CD4-positive, alpha-beta memory T cell (primary cell): ENCODE measurements at regions of chr13 and their contacts with region 1.

Region 1: DNA sequence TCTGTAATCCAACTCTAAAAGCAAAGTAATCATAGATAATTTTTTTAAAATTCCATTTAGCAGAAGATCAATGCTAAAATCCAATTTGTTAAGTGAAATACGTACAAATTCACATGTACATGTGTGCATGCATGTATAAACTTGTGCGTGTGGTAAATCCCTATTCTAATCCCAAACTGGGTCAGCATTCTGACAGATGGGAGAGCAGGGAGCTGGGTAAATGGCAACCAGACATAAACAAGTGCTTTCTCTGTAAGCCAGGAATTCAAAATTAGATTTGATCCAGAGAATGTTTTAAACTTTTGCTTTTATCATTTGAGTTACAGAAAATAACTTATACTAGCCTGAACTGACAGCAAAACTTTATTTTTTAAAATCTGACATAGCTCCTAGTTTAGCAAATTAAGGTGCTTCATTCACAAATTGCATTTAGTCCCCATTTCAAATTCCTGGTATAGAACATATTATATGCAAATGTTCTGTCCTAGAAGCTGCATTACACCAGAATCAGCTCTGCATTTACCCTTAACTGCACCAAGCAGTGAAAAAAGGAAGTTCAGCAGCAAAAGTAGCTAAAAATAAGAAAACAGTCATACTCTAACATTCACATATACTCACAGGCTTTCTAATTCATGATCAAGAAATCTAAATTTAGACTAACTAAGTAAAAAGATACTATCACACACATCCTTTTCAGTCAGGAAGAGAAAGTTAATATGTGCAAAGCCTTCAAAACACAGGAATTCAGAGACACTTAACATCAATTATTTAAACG is 32.6 kb downstream of the UBL3 start:
- DNase-seq: no peak
- H3K4me3 ChIP-seq: no peak overlapping the region
- H3K4me3 Mint-ChIP-seq: peak overlapping the region in 5 of 8 donors; percentile 6 to 78 (median 29)
- H3K27ac ChIP-seq: no peak overlapping the region
- H3K27ac Mint-ChIP-seq: peak overlapping the region in 3 of 7 donors; percentile 10 to 51 (median 18)
- H3K4me1 ChIP-seq: peaks cover 41% of the 10 kb centered on the region
- H3K4me1 Mint-ChIP-seq: peaks cover 39 to 59% (median 49%) of the 10 kb centered on the region in 4 donors
- H3K27me3 ChIP-seq: no peaks in the 10 kb centered on the region
- H3K27me3 Mint-ChIP-seq: no peaks in the 10 kb centered on the region

Region 2: GRCh38 chr13:29654843-29655547 is 162.8 kb before region 1 on chr13:
- CTCF ChIA-PET with region 1: no interaction called
- POLR2A ChIA-PET with region 1: no interaction called
- intact Hi-C with region 1: no loop called
- DNase-seq: no peak
- H3K4me3 ChIP-seq: no peak overlapping the region
- H3K4me3 Mint-ChIP-seq: no peak overlapping the region
- H3K27ac ChIP-seq: no peak overlapping the region
- H3K27ac Mint-ChIP-seq: peak overlapping the region in 1 of 7 donors; percentile 61
- H3K4me1 ChIP-seq: no peaks in the 10 kb centered on the region
- H3K4me1 Mint-ChIP-seq: peaks cover 0 to 2% (median 0%) of the 10 kb centered on the region in 4 donors
- H3K27me3 ChIP-seq: no peaks in the 10 kb centered on the region
- H3K27me3 Mint-ChIP-seq: peaks cover 10 to 14% of the 10 kb centered on the region in 2 donors

Region 3: DNA sequence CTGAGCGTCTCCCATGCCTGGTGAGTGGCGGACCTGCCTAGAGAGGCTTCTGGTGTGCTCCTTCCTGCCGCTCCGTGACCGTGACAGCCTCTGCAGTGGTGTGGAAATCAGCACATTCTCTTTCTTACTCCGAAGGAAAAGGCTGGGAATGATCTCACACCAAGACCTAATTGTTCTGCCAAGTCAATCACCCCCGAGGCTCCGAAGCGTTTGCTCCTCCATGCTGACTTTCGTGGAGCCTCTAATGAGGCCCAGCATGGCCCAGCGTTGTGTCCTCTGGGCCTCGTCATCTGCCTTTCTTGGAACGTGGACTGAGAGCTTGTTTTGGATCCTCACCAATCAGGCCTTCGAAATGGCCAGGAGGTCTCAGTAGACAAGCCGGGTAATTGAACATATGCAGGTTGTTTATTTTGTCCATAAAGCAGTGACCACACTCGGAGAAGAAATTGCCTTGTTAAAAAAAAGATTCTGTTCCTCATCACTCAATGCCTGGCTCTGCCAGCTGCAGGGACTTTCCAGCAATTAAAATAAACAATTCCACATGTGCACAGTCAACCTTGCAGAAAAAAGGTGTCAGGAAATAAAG is 74.5 kb before region 1 on chr13:
- CTCF ChIA-PET with region 1: no interaction called
- POLR2A ChIA-PET with region 1: no interaction called
- intact Hi-C with region 1: no loop called
- DNase-seq: no peak
- H3K4me3 ChIP-seq: no peak overlapping the region
- H3K4me3 Mint-ChIP-seq: no peak overlapping the region
- H3K27ac ChIP-seq: no peak overlapping the region
- H3K27ac Mint-ChIP-seq: no peak overlapping the region
- H3K4me1 ChIP-seq: no peaks in the 10 kb centered on the region
- H3K4me1 Mint-ChIP-seq: no peaks in the 10 kb centered on the region
- H3K27me3 ChIP-seq: no peaks in the 10 kb centered on the region
- H3K27me3 Mint-ChIP-seq: peaks cover 2 to 6% of the 10 kb centered on the region in 2 donors

Region 4: GRCh38 chr13:29835280-29836061 is 17.7 kb after region 1 on chr13:
- CTCF ChIA-PET with region 1: no interaction called
- POLR2A ChIA-PET with region 1: no interaction called
- intact Hi-C with region 1: loop called (anchors 2 kb)
- DNase-seq: no peak
- H3K4me3 ChIP-seq: no peak overlapping the region
- H3K4me3 Mint-ChIP-seq: peak overlapping the region in 2 of 8 donors; percentile 14 to 27
- H3K27ac ChIP-seq: no peak overlapping the region
- H3K27ac Mint-ChIP-seq: no peak overlapping the region
- H3K4me1 ChIP-seq: peaks cover 32% of the 10 kb centered on the region
- H3K4me1 Mint-ChIP-seq: peaks cover 50 to 77% (median 61%) of the 10 kb centered on the region in 4 donors
- H3K27me3 ChIP-seq: no peaks in the 10 kb centered on the region
- H3K27me3 Mint-ChIP-seq: no peaks in the 10 kb centered on the region

Region 5: GRCh38 chr13:30158774-30159445 is 341.1 kb after region 1 on chr13:
- CTCF ChIA-PET with region 1: no interaction called
- POLR2A ChIA-PET with region 1: no interaction called
- intact Hi-C with region 1: no loop called
- DNase-seq: peak in 4 of 5 donors; percentile 58 to 61 (median 60)
- H3K4me3 ChIP-seq: no peak overlapping the region
- H3K4me3 Mint-ChIP-seq: peak overlapping the region in 7 of 8 donors; percentile 17 to 69 (median 59)
- H3K27ac ChIP-seq: no peak overlapping the region
- H3K27ac Mint-ChIP-seq: peak overlapping the region in 5 of 7 donors; percentile 7 to 89 (median 74)
- H3K4me1 ChIP-seq: peaks cover 39% of the 10 kb centered on the region
- H3K4me1 Mint-ChIP-seq: peaks cover 26 to 61% (median 41%) of the 10 kb centered on the region in 4 donors
- H3K27me3 ChIP-seq: no peaks in the 10 kb centered on the region
- H3K27me3 Mint-ChIP-seq: no peaks in the 10 kb centered on the region